GM12878 (cell line): ENCODE measurements at regions of chr15 and their contacts with region 1.

Region 1: GRCh38 chr15:78859971-78860732 is 12.5 kb upstream of the MORF4L1 start:
- DNase-seq: peak; percentile 44
- ATAC-seq: peak; percentile 95
- H3K4me3 ChIP-seq: peak overlapping the region; percentile 59
- H3K27ac ChIP-seq: no peak overlapping the region
- H3K4me1 ChIP-seq: peaks cover 3% of the 10 kb centered on the region; the same call in 1 of the 2 replicates
- H3K27me3 ChIP-seq: no peaks in the 10 kb centered on the region
- CTCF ChIP-seq: peak; percentile 50 to 56 (median 56); a peak in 5 of 6 replicates
- EP300 ChIP-seq: no peak; a peak in 1 of 4 replicates
- POLR2A ChIP-seq: no peak
- RAD21 ChIP-seq: peak; percentile 41; the same call in 1 of the 2 replicates

Region 2: GRCh38 chr15:78695854-78696253 is 164.3 kb before region 1 on chr15:
- CTCF ChIA-PET with region 1: no interaction called
- POLR2A ChIA-PET with region 1: no interaction called
- RAD21 ChIA-PET with region 1: no interaction called
- SMC1A ChIA-PET with region 1: no interaction called
- in situ Hi-C with region 1: no loop called
- intact Hi-C with region 1: no loop called
- DNase-seq: no peak
- ATAC-seq: no peak
- H3K4me3 ChIP-seq: no peak overlapping the region
- H3K27ac ChIP-seq: no peak overlapping the region
- H3K4me1 ChIP-seq: peaks cover 4% of the 10 kb centered on the region
- H3K27me3 ChIP-seq: no peaks in the 10 kb centered on the region; a peak in 1 of 4 replicates
- CTCF ChIP-seq: no peak
- EP300 ChIP-seq: no peak
- POLR2A ChIP-seq: no peak
- RAD21 ChIP-seq: no peak

Region 3: GRCh38 chr15:78840661-78841375 is 19.3 kb before region 1 on chr15:
- CTCF ChIA-PET with region 1: interaction called, 15 read pairs
- POLR2A ChIA-PET with region 1: interaction called, 3 read pairs
- RAD21 ChIA-PET with region 1: no interaction called
- SMC1A ChIA-PET with region 1: interaction called, 7 read pairs
- in situ Hi-C with region 1: no loop called
- intact Hi-C with region 1: no loop called
- DNase-seq: no peak
- ATAC-seq: peak; percentile 88
- H3K4me3 ChIP-seq: no peak overlapping the region
- H3K27ac ChIP-seq: peak overlapping the region; percentile 89
- H3K4me1 ChIP-seq: peaks cover 36% of the 10 kb centered on the region
- H3K27me3 ChIP-seq: no peaks in the 10 kb centered on the region
- CTCF ChIP-seq: no peak
- EP300 ChIP-seq: peak in 1 of 2 experiments; percentile 13; a peak in 1 of 4 replicates
- POLR2A ChIP-seq: no peak
- RAD21 ChIP-seq: no peak